AG04450 (cell line): ENCODE measurements at regions of chr18 and their contacts with region 1.

Region 1: DNA sequence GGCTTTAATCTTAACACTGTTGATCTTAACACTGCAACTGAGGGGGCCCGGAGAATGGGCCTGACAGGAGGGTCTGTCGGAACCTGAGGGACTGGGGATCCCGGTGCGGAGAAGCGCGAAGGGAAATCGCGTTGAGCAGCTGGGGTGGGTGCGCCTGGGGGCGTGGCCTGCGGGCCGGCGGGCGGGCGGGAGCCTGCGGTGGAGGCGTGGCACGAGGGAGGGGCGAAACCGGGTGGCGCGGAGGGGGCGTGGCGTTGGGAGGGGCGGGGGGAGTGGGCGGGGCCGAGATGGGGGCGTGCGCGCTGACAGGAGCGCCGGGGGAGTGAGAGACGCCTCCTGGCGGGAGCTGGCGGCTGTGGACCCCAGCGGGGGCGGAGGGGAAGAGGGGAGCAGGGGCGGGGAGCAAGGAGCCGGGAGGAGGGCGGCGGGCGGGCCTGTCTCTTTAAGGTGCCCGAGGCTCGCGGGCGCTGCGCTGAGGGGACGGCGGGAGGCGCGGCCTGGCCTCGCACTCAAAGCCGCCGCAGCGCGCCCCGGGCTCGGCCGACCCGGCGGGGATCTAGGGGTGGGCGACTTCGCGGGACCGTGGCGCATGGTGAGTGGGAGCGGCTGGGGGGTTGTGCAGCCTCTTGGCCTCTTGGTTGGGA is at the start of gene TWSG1:
- DNase-seq: peak; percentile 91
- H3K4me3 ChIP-seq: peak within 1 kb of the TSS; percentile 68
- H3K27ac ChIP-seq: peak within 1 kb of the TSS; percentile 83
- H3K27me3 ChIP-seq: no peaks in the 10 kb centered on the region
- CTCF ChIP-seq: peak; percentile 32; the same call in 1 of the 2 replicates
- polyA plus RNA-seq, gene TWSG1: 301 and 328 TPM in 2 replicates

Region 2: DNA sequence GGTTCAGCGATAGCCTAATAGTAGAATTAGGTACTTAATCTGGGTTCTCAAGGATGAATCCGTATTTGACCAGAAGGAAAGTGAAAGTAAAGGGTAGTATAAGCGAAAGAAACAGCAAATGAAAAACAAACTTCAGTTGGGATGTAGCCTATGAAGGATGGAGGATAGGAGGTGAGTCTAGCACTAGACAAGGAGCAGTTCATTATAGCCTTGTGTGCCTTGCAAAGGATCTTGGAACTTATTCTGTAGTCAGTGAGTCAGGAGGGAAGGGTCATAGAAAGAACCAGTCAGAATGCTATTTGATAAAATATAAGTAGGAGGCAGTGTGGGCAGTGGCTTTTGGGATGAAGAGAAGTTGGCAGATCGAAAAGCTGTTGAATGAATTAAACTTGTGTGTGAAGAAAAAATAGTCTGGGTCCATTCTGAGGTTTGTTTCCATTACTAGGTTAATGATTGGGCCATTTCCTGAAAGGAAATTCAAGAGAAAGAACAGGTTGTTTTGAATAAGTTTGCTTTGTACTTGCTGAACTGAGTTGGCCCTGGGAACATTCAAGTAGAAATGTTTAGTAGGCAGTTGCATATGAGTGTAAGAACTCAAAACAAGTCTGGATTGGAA is 149.3 kb before region 1 on chr18:
- CTCF ChIA-PET with region 1: no interaction called
- POLR2A ChIA-PET with region 1: no interaction called
- DNase-seq: no peak
- H3K4me3 ChIP-seq: no peak overlapping the region
- H3K27ac ChIP-seq: no peak overlapping the region
- H3K27me3 ChIP-seq: no peaks in the 10 kb centered on the region
- CTCF ChIP-seq: no peak

Region 3: DNA sequence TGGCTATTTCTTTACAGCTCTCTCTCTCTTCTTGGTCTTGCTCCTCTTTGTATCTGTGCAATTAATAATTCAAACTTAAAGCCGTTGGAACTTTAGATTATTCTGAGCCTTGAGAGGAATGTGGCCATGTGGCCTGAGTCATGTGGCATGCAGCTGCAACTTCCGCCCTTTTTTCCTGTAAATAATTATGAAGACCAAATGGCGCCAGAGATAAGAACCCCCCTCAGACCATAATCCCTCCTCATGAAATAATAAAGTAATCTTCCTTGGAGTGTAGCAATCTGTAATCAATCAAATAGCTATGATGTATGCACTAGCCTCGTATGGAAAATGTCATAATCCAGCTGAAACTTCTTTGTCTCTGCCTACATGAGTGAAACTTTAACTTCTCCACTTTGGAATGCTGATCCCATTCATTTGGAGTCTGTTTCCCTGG is 13.4 kb before region 1 on chr18:
- CTCF ChIA-PET with region 1: interaction called, 7 read pairs
- POLR2A ChIA-PET with region 1: interaction called, 14 read pairs
- DNase-seq: peak; percentile 78
- H3K4me3 ChIP-seq: no peak overlapping the region
- H3K27ac ChIP-seq: peak overlapping the region; percentile 86
- H3K27me3 ChIP-seq: no peaks in the 10 kb centered on the region
- CTCF ChIP-seq: no peak